Naive thymus-derived CD4-positive, alpha-beta T cell (primary cell): ENCODE measurements at regions of chr7 and their contacts with region 1.

Region 1: GRCh38 chr7:13279854-13280435 is 592.5 kb downstream of the ARL4A start:
- DNase-seq: peak in 1 of 9 donors; percentile 6
- ATAC-seq: no peak
- H3K4me3 ChIP-seq: no peak overlapping the region
- H3K4me3 Mint-ChIP-seq: no peak overlapping the region
- H3K27ac ChIP-seq: no peak overlapping the region
- H3K27ac Mint-ChIP-seq: no peak overlapping the region
- H3K4me1 ChIP-seq: no peaks in the 10 kb centered on the region
- H3K4me1 Mint-ChIP-seq: no peaks in the 10 kb centered on the region
- H3K27me3 ChIP-seq: no peaks in the 10 kb centered on the region
- H3K27me3 Mint-ChIP-seq: peaks cover 0 to 15% (median 8%) of the 10 kb centered on the region in 5 donors

Region 2: DNA sequence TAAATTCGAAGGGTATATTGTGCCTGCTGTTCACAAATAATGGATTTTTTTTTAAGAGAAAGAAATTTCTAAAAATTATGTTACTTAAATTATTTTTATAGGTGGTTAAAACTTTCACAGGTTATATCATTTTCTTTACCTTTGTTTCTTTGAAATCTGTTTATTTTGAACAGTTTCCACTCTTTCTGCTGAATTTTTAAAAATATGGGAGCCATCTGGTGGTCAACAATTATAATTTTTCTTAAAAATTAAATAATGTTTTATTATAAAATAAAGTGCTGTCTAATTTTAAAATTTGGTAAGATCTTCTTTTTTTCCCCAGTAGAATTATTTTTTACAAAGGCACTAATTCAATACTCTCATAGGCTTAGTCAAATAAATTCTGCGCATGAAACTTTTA is 445.6 kb after region 1 on chr7:
- CTCF ChIA-PET with region 1: no interaction called
- POLR2A ChIA-PET with region 1: no interaction called
- intact Hi-C with region 1: loop called in 1 of 2 experiments (anchors 10 kb)
- DNase-seq: no peak
- ATAC-seq: no peak
- H3K4me3 ChIP-seq: no peak overlapping the region
- H3K4me3 Mint-ChIP-seq: no peak overlapping the region
- H3K27ac ChIP-seq: no peak overlapping the region
- H3K27ac Mint-ChIP-seq: no peak overlapping the region
- H3K4me1 ChIP-seq: no peaks in the 10 kb centered on the region
- H3K4me1 Mint-ChIP-seq: no peaks in the 10 kb centered on the region
- H3K27me3 ChIP-seq: no peaks in the 10 kb centered on the region
- H3K27me3 Mint-ChIP-seq: no peaks in the 10 kb centered on the region

Region 3: GRCh38 chr7:14457568-14458453 is 1177.9 kb after region 1 on chr7:
- CTCF ChIA-PET with region 1: interaction called, 3 read pairs
- POLR2A ChIA-PET with region 1: no interaction called
- intact Hi-C with region 1: loop called in 1 of 2 experiments (anchors 1 kb)
- DNase-seq: peak in 4 of 9 donors; percentile 10 to 22 (median 18)
- ATAC-seq: peak; percentile 49
- H3K4me3 ChIP-seq: no peak overlapping the region
- H3K4me3 Mint-ChIP-seq: no peak overlapping the region
- H3K27ac ChIP-seq: no peak overlapping the region
- H3K27ac Mint-ChIP-seq: no peak overlapping the region
- H3K4me1 ChIP-seq: no peaks in the 10 kb centered on the region
- H3K4me1 Mint-ChIP-seq: peaks cover 0 to 4% (median 0%) of the 10 kb centered on the region in 7 donors
- H3K27me3 ChIP-seq: no peaks in the 10 kb centered on the region
- H3K27me3 Mint-ChIP-seq: peaks cover 0 to 4% (median 0%) of the 10 kb centered on the region in 5 donors

Region 4: GRCh38 chr7:14691597-14692203 is 1411.8 kb after region 1 on chr7:
- CTCF ChIA-PET with region 1: interaction called, 4 read pairs
- POLR2A ChIA-PET with region 1: no interaction called
- intact Hi-C with region 1: loop called (anchors 1 kb)
- DNase-seq: peak in 5 of 9 donors; percentile 8 to 28 (median 14)
- ATAC-seq: no peak
- H3K4me3 ChIP-seq: no peak overlapping the region
- H3K4me3 Mint-ChIP-seq: no peak overlapping the region
- H3K27ac ChIP-seq: no peak overlapping the region
- H3K27ac Mint-ChIP-seq: no peak overlapping the region
- H3K4me1 ChIP-seq: no peaks in the 10 kb centered on the region
- H3K4me1 Mint-ChIP-seq: no peaks in the 10 kb centered on the region
- H3K27me3 ChIP-seq: no peaks in the 10 kb centered on the region
- H3K27me3 Mint-ChIP-seq: peaks cover 0 to 5% (median 0%) of the 10 kb centered on the region in 5 donors

Region 5: DNA sequence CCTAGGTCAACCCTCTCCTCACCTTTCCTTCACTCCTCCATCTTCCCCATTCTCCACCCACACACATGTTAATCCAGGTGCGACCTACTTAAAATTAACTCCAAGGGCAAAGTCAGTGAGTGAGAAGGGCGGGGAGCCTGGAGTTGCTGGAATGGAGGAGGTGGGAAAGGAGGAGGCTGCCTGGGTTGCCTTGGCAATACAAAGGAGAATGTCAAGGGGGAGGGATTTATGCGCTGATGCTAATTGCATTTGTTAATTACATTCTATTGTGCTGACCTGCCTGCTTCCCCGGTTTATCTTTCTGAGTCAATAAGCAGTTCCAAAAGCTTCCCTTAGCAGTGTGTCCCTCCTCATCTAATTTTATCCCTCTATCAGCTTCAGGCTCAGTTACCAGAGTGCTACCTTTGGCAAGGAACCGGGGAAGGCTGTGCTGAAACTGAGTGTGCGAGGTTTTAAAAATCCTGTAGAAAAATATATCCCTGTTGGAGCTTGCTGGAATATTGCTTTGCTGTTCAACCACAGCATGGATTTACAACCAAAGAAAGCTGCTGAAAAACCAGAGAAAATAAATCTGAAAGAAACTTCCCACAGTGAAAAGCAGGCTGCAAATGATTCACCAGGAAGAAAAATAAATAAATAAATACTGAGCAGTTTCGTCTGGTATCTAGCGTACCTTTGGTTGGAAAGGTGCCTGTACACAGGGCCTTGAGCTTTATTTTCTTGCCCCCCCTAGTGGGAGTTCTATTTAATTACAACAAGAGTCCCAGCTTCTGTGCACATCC is 1735.8 kb after region 1 on chr7:
- CTCF ChIA-PET with region 1: no interaction called
- POLR2A ChIA-PET with region 1: no interaction called
- intact Hi-C with region 1: loop called (anchors 5 kb)
- DNase-seq: peak in 2 of 9 donors; percentile 4 to 8
- ATAC-seq: no peak
- H3K4me3 ChIP-seq: no peak overlapping the region
- H3K4me3 Mint-ChIP-seq: no peak overlapping the region
- H3K27ac ChIP-seq: no peak overlapping the region
- H3K27ac Mint-ChIP-seq: no peak overlapping the region
- H3K4me1 ChIP-seq: no peaks in the 10 kb centered on the region
- H3K4me1 Mint-ChIP-seq: no peaks in the 10 kb centered on the region
- H3K27me3 ChIP-seq: no peaks in the 10 kb centered on the region
- H3K27me3 Mint-ChIP-seq: no peaks in the 10 kb centered on the region